Right ventricle myocardium inferior (tissue), 1 donor: ENCODE measurements at regions of chr14 and their contacts with region 1.

Region 1: DNA sequence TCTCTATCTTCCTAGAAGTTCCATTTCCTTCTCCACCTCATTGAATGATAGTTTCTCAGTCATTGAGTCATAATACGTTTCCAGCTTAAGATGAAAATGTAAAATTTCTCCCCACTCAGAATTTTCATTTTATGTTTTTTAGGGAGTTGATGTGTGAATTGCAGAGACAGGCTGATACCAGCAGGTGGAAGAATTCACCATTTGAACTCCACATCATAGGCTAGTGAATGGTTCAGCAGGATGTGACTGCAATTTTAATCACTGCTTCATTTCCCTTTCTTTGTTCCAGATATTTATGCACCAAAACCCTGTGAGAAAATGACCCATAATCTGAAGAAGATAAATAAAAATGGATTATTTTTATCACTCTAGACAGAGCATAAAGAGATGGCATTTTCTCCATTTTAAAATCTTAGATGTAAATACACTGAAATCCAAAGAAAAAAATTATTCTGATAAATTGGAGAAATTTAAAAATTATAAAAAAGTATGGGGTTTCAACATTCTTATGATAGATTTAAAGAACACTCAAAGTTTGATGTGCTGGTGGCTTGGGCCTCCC is 10.6 kb upstream of the PYGL start:
- DNase-seq: no peak
- ATAC-seq: peak; percentile 69

Region 2: DNA sequence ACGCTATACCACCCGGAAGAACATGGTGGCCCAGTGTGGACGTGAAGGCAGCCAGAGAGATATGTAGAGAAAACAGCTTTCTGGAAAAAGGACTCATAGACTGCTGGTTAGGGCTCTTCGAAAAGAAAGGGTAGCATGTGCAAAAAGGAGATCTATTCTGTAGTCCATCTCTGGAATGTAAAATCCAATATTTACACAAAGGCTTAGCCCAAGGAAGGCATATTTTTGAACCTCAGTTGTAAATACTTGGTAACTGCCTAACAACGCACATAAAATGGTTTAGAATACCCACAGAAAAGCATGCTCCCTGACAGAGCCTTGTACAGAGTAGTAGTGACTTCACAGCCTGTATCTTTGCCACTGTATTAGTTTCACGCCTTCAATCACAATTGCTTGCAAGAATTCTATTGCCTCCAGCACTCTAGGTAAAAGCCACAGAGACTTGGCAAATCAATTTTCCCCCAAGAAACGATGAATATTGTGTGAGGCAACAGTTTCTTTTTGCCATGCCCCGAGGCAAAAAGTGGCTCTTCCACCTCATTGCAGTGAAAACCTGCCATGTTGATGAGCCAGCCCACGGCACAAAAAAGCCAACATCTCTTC is 80.8 kb after region 1 on chr14:
- intact Hi-C with region 1: no loop called
- DNase-seq: no peak
- ATAC-seq: no peak

Region 3: DNA sequence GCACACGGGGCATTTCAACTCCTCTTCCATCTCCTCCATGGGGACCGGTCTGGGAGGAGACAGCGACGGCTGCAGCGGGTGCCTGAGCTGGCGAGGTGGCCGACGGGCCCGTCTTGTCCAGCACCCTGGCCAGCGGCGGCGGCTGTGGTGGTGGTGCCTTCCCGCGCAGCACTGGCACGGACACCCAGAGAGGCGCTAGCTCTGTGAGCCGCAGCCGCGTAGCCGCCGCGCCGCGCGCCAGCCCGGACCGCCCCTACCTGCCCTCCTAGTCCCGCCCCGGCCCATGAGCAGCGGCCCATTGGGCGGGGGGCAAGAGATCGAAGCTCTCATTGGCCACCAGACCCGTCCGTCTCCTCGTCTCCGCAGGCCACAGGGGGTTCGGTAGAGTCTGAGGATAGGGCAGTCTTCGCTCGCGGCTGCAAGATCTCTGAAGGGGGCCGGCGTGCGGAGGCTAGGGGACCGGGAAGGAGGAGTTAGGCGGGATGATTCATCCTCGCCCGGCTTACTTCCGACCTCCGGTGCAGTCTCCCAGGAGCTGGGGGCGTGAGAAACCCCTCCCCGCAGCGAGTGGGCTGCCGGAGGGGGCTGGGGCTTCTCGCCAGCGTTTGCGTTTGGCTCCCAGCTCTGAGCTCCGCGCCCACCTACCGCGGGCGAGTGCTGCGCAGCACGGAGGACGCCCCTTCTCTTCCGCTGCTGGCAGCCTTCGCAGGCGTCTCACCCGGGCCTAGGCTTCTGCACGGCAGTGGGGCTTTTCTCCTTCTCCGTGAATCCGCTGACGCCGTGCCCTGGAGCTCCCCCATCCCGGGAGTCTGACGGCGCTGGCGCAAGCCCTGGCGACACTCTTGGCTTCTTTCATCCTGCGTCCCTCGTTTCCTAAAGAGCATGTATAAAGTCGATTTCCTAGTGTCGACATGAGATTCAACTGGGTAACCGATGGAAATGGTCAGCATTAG is 140.3 kb after region 1 on chr14 and contains the start of gene TRIM9:
- intact Hi-C with region 1: loop called (anchors 10 kb)
- DNase-seq: peak; percentile 95
- ATAC-seq: peak; percentile 98
- total RNA-seq, gene TRIM9: 0.62 TPM

Region 4: GRCh38 chr14:51219473-51220448 is 264.9 kb after region 1 on chr14:
- intact Hi-C with region 1: loop called (anchors 1 kb)
- DNase-seq: no peak
- ATAC-seq: no peak

Region 5: DNA sequence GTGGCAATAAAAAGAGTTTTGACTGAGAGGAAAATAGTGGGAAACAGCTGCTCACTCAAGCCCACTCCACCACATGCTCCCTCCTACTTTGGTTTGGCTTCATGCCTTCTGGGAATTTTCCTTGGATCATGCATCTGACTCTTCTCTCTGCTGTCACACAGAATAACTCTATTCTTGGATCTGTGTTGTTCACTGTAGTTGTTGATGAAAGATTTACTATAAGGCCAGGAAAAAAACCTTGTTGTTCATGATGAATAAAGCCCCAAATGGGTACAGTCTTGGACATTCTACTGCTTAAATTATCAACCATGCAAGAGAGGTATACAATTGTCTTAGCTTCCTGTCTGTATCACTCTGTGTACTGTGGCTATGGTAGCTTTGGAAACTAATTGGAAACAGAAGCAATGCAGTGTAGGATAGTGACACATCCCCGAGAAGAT is 355.6 kb after region 1 on chr14:
- intact Hi-C with region 1: no loop called
- DNase-seq: no peak
- ATAC-seq: peak; percentile 92